ENCODE measurements at regions of chr2 and their contacts with region 1.

Region 1: GRCh38 chr2:120174963-120175581 is 48.1 kb downstream of the TMEM185B start:
- DNase-seq: peak in 1 of 2 donors; percentile 81
- ATAC-seq: no peak
- H3K4me3 ChIP-seq: no peak overlapping the region
- H3K4me3 Mint-ChIP-seq: no peak overlapping the region
- H3K27ac ChIP-seq: no peak overlapping the region
- H3K27ac Mint-ChIP-seq: peak overlapping the region; percentile 98 to 99
- H3K4me1 ChIP-seq: peaks cover 14% of the 10 kb centered on the region
- H3K4me1 Mint-ChIP-seq: peaks cover 18 to 32% of the 10 kb centered on the region in 2 donors
- H3K27me3 ChIP-seq: no peaks in the 10 kb centered on the region
- H3K27me3 Mint-ChIP-seq: peaks cover 0 to 4% of the 10 kb centered on the region in 2 donors
- CTCF ChIP-seq: peak; percentile 92

Region 2: GRCh38 chr2:119641562-119642258 is 533.4 kb before region 1 on chr2:
- intact Hi-C with region 1: loop called (anchors 2 kb)
- DNase-seq: peak; percentile 48 to 86
- ATAC-seq: peak; percentile 87 to 99 (median 94)
- H3K4me3 ChIP-seq: no peak overlapping the region
- H3K4me3 Mint-ChIP-seq: no peak overlapping the region
- H3K27ac ChIP-seq: no peak overlapping the region
- H3K27ac Mint-ChIP-seq: no peak overlapping the region
- H3K4me1 ChIP-seq: no peaks in the 10 kb centered on the region
- H3K4me1 Mint-ChIP-seq: no peaks in the 10 kb centered on the region
- H3K27me3 ChIP-seq: no peaks in the 10 kb centered on the region
- H3K27me3 Mint-ChIP-seq: peaks cover 18 to 28% of the 10 kb centered on the region in 2 donors
- CTCF ChIP-seq: peak; percentile 94

Region 3: GRCh38 chr2:119702918-119703401 is 472.1 kb before region 1 on chr2:
- intact Hi-C with region 1: loop called (anchors 1 kb)
- DNase-seq: peak; percentile 58 to 83
- ATAC-seq: peak; percentile 90 to 98 (median 95)
- H3K4me3 ChIP-seq: no peak overlapping the region
- H3K4me3 Mint-ChIP-seq: no peak overlapping the region
- H3K27ac ChIP-seq: no peak overlapping the region
- H3K27ac Mint-ChIP-seq: no peak overlapping the region
- H3K4me1 ChIP-seq: peaks cover 9% of the 10 kb centered on the region
- H3K4me1 Mint-ChIP-seq: peaks cover 0 to 6% of the 10 kb centered on the region in 2 donors
- H3K27me3 ChIP-seq: no peaks in the 10 kb centered on the region
- H3K27me3 Mint-ChIP-seq: peaks cover 6 to 12% of the 10 kb centered on the region in 2 donors
- CTCF ChIP-seq: peak; percentile 95

Region 4: DNA sequence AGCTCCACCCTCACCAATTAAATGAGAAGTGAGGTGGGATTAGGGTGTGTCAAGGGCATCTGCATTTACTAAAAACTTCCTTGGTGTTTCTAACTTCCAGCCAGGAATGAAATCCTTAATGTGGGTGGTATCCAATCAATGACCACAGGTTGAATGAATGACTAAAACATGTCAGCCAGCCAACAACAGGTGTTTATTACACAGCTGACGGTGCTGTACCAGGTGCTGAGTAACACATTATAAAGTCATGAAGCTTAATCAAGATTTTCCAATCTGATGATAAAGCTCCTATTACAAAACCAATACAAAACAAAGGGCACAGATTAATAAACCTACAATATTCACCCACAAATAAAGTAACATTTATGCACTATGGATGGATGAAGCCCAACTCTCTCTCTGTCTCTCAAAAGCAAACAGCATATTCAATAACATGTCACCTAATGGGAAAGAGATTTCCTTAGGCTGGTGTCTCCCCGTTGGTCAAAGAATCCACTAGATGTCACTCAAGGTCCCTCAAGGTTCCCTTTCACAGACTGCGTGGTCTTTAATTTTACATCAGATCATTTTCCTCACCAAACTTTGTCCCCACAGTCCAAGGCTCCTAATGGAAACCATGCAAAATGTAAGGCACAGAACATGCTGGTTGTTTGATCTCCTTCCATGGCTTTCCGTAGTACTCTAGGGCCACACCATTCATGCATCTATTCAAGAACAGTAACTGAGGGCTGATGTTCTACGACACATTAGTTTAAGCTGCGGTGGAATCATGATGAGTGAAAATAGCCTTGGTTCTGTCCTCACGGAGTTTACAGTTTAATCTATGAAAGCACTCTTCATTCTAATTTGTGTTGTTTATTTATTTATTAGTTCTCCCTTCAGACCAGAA is 421.8 kb before region 1 on chr2:
- intact Hi-C with region 1: loop called (anchors 1 kb)
- DNase-seq: peak in 1 of 2 donors; percentile 80
- ATAC-seq: peak; percentile 66 to 89 (median 86)
- H3K4me3 ChIP-seq: no peak overlapping the region
- H3K4me3 Mint-ChIP-seq: no peak overlapping the region
- H3K27ac ChIP-seq: no peak overlapping the region
- H3K27ac Mint-ChIP-seq: no peak overlapping the region
- H3K4me1 ChIP-seq: no peaks in the 10 kb centered on the region
- H3K4me1 Mint-ChIP-seq: peaks cover 5 to 7% of the 10 kb centered on the region in 2 donors
- H3K27me3 ChIP-seq: no peaks in the 10 kb centered on the region
- H3K27me3 Mint-ChIP-seq: no peaks in the 10 kb centered on the region
- CTCF ChIP-seq: peak; percentile 73

Region 5: GRCh38 chr2:119929537-119929936 is 245.5 kb before region 1 on chr2:
- intact Hi-C with region 1: loop called (anchors 5 kb)
- DNase-seq: peak in 1 of 2 donors; percentile 73
- ATAC-seq: peak; percentile 74 to 86 (median 86)
- H3K4me3 ChIP-seq: peak overlapping the region; percentile 72
- H3K4me3 Mint-ChIP-seq: peak overlapping the region; percentile 86
- H3K27ac ChIP-seq: peak overlapping the region; percentile 76
- H3K27ac Mint-ChIP-seq: peak overlapping the region; percentile 83 to 97
- H3K4me1 ChIP-seq: peaks cover 9% of the 10 kb centered on the region
- H3K4me1 Mint-ChIP-seq: peaks cover 47 to 56% of the 10 kb centered on the region in 2 donors
- H3K27me3 ChIP-seq: no peaks in the 10 kb centered on the region
- H3K27me3 Mint-ChIP-seq: no peaks in the 10 kb centered on the region
- CTCF ChIP-seq: no peak

Region 6: GRCh38 chr2:120109186-120110061 is 65.6 kb before region 1 on chr2:
- intact Hi-C with region 1: loop called (anchors 5 kb)
- DNase-seq: peak in 1 of 2 donors; percentile 62
- ATAC-seq: peak; percentile 48 to 82 (median 52)
- H3K4me3 ChIP-seq: no peak overlapping the region
- H3K4me3 Mint-ChIP-seq: peak overlapping the region; percentile 49
- H3K27ac ChIP-seq: peak overlapping the region; percentile 7
- H3K27ac Mint-ChIP-seq: peak overlapping the region; percentile 6 to 21
- H3K4me1 ChIP-seq: no peaks in the 10 kb centered on the region
- H3K4me1 Mint-ChIP-seq: peaks cover 18 to 21% of the 10 kb centered on the region in 2 donors
- H3K27me3 ChIP-seq: no peaks in the 10 kb centered on the region
- H3K27me3 Mint-ChIP-seq: peaks cover 7 to 12% of the 10 kb centered on the region in 2 donors
- CTCF ChIP-seq: no peak

Region 7: GRCh38 chr2:120132190-120132589 is 42.9 kb before region 1 on chr2:
- intact Hi-C with region 1: no loop called
- DNase-seq: no peak
- ATAC-seq: no peak
- H3K4me3 ChIP-seq: no peak overlapping the region
- H3K4me3 Mint-ChIP-seq: no peak overlapping the region
- H3K27ac ChIP-seq: no peak overlapping the region
- H3K27ac Mint-ChIP-seq: no peak overlapping the region
- H3K4me1 ChIP-seq: no peaks in the 10 kb centered on the region
- H3K4me1 Mint-ChIP-seq: no peaks in the 10 kb centered on the region
- H3K27me3 ChIP-seq: no peaks in the 10 kb centered on the region
- H3K27me3 Mint-ChIP-seq: peaks cover 7 to 11% of the 10 kb centered on the region in 2 donors
- CTCF ChIP-seq: no peak

Region 8: GRCh38 chr2:120252225-120253021 is 77.4 kb after region 1 on chr2 and contains the start of gene RALB:
- intact Hi-C with region 1: loop called (anchors 1 kb)
- DNase-seq: peak; percentile 98 to 99
- ATAC-seq: peak; percentile 94 to 98 (median 94)
- H3K4me3 ChIP-seq: peak within 1 kb of the TSS; percentile 86
- H3K4me3 Mint-ChIP-seq: peak within 1 kb of the TSS; percentile 100
- H3K27ac ChIP-seq: peak within 1 kb of the TSS; percentile 71
- H3K27ac Mint-ChIP-seq: peak within 1 kb of the TSS; percentile 94 to 96
- H3K4me1 ChIP-seq: peaks cover 15% of the 10 kb centered on the region
- H3K4me1 Mint-ChIP-seq: peaks cover 48 to 57% of the 10 kb centered on the region in 2 donors
- H3K27me3 ChIP-seq: no peaks in the 10 kb centered on the region
- H3K27me3 Mint-ChIP-seq: peaks cover 7 to 10% of the 10 kb centered on the region in 2 donors
- CTCF ChIP-seq: no peak
- total RNA-seq, gene RALB: 21.0 to 25.9 (median 25.4) TPM

Measured in natural killer cell (primary cell).